ENCODE measurements at regions of chr17 and their contacts with region 1.

Region 1: DNA sequence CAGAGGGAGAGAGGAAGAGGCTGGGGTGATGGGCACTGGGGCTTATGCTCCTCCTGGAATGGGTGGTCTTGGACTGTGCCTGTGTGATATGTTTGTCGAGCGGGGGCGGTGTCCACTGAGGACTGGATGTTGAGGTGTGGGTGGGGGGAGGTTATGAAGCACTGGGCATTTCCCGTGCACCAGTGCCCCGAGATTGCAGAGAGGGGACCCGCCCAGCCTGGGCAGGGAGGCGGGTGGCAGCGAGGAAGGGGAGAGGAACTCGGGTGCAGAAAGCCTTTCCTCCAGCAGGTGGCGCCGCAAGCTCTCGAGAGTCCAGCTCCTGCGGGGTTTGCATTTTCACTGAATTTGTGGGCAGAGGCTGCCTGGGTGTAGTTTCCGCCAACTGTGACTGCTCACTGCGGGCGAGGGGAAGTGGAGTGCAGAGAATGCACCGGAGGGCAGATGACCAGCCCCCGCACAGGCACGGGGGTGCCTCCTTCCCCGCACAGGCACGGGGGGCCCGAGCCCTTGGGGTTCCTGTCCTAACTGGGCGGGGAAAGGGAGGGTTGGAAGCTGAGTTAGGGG is 190.6 kb downstream of the SEC14L1 start:
- DNase-seq: peak; percentile 92
- CTCF ChIP-seq: peak; percentile 86

Region 2: DNA sequence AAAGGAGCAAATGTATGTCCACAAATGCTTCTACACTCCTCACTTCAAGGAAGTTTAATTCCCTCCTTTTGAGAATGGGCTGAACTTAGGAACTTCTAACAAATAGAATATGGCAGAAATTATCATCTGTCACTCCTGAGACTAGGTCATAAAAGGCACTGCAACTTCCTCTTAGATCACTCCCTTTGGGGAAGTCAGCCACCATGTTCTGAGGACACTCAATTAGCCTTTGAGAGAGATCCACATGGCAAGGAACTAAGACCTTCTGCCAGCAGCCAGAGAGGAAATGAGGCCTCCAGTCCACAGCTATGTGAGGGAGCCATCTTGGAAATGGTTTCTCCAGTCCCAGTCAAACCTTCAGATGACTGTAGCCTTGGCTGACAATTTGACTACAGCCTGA is 304.1 kb before region 1 on chr17:
- CTCF ChIA-PET with region 1: no interaction called
- POLR2A ChIA-PET with region 1: no interaction called
- DNase-seq: no peak
- CTCF ChIP-seq: no peak

Region 3: DNA sequence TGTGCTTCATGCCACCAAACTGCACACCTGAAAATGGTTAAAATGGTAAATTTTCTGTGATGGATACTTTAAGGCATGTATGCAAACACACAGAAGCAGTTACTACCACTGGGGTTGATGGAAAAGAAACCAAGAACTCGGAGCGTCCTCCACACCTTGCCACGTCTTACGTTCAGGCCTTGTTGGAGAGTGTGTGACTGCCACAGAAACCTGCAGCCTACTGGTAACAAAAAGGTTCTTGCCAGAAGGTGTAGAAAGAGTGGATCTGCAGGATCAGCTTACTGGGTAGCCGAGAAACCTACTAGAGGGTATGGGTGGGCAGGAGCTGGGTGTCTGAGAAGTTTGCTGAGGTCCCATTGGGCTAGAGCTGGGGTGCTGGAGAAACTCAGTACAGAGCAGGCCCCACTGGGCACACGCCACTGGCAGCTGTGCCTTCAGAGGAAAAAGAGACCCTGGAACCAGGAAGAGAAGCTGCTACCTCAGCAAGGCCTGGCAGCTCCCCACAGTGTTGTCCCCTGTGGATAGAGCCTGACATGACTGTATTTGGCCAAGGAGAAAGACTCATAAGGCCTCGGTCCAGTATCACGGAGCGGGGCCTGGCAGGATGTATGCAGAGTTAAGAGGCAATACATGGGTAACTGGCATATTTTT is 14.0 kb after region 1 on chr17:
- CTCF ChIA-PET with region 1: interaction called, 14 read pairs
- POLR2A ChIA-PET with region 1: no interaction called
- DNase-seq: no peak
- CTCF ChIP-seq: no peak

Region 4: GRCh38 chr17:77388384-77389311 is 57.3 kb after region 1 on chr17:
- CTCF ChIA-PET with region 1: interaction called, 11 read pairs
- POLR2A ChIA-PET with region 1: interaction called, 7 read pairs
- DNase-seq: no peak
- CTCF ChIP-seq: no peak

Region 5: DNA sequence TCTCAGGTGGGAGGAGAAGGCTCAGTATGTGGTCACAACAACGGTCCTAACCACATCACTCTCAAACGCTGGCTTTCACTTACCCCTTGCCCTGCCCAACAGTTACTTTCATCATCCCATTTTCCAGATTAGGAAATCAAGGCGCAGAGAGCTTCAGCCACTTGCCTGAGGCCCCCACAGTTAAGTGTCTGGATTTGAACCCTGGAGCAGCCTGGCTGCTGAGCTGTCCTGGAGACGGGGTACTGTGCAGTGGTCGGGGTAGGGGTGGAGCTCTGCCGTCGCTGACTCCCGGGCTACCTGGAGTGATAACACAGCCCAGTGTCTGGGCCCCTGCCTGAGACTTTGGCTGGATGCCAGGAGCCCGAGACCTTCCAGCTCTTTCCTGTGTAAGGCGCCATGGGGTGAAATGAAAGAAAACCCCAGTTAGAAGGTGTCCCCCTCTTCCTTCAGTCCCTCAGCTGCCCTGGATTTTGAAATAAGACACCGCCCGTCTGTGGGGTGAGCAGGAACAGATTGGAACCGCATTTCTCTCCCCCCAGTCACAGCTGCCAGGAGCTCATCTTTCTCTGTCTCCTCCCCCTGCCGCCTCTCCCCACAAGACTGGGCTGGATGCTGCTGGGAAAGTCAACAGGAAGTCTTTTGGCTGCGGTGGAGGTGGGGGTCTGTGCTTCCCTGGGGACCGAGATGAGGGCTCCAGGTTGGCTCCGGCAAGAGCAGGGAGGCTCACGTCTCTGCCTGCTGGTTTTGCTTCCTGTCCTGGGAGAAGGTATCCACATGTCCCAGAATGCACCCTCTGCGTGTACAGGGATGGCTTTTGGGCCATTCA is 89.6 kb after region 1 on chr17:
- CTCF ChIA-PET with region 1: interaction called, 14 read pairs
- POLR2A ChIA-PET with region 1: no interaction called
- DNase-seq: no peak
- CTCF ChIP-seq: no peak

Region 6: DNA sequence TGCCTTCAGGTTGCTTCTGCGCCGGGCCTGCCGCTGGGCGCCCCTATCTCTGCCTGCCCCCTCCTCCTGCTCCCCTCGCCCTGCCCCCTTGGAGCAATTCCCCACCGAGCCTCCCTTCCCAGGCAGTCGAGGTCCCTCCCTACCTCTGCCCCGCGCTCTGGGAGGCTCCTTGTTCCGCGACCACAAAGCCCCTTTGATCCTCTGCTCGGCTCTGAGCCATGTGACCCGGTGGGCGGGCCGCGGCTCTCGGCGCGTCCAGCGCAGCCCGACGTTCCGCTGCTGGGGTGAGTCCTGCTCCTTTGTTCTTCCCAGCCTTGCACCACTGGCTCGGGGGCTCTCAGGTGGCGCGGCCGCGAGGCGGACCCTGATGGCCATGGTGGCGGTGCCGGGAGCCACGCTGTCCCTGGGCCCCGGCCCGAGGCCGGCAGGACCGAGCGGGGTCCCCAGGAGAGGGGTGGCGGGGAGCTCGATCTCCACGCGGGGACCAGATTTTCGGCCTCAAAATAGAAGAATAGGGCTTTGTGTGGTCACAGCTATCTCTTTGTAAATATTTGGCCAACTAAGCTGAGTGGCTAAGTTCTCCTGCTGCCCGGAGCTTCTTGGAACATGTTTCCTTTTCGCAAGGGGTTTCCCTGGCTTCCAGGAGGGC is 120.0 kb after region 1 on chr17:
- CTCF ChIA-PET with region 1: interaction called, 19 read pairs
- POLR2A ChIA-PET with region 1: no interaction called
- DNase-seq: peak; percentile 73
- CTCF ChIP-seq: no peak

Region 7: DNA sequence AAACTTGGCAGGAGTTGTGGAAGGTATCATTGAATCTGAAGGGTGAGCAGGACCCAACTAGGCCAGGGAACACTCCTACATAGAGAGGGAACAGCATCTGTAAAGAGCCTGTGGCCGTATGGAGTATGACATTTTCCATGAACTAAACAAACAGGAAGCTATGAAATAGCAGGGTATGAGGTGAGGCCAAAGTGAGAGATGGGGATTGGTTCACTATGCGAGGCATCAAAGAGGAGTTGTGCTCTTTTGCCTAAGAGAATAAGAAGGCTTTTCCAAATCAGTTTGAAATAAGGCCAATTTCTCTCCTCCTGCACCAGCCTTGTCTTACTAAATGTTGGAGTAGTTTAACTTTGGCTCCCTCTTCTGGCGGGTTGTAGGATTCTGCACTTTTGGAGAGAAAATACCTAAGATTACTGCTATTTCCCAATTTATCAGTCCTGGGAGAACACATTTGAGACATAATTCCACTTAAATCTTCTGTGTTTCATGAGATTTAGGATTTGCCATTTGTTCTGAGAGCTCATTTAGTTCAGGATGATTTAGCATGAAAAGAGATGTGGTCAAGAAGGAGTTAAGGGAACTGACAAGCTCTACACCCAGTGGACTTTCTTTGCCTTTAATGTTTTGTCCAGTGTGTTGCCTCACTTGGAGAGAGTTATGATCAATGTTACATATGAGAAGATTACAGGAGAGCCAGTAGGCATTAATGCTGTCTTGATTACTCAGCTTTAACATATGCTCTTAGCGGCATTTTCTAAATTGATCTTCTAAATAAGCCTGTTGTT is 682.5 kb after region 1 on chr17:
- CTCF ChIA-PET with region 1: interaction called, 14 read pairs
- POLR2A ChIA-PET with region 1: no interaction called
- DNase-seq: peak; percentile 58
- CTCF ChIP-seq: peak; percentile 70

Measured in GM10248 (cell line).